ENCODE measurements at regions of chr12 and their contacts with region 1.

Region 1: GRCh38 chr12:6873094-6874014 is at the start of gene SPSB2:
- DNase-seq: peak; percentile 96
- H3K4me3 ChIP-seq: peak within 1 kb of the TSS; percentile 59 to 92 (median 84)
- H3K27ac ChIP-seq: peak within 1 kb of the TSS; percentile 60
- H3K4me1 ChIP-seq: peaks cover 34% of the 10 kb centered on the region
- H3K27me3 ChIP-seq: no peaks in the 10 kb centered on the region
- CTCF ChIP-seq: no peak
- POLR2A ChIP-seq: peak; percentile 91
- total RNA-seq, gene SPSB2: 3.9 and 6.9 TPM in 2 replicates

Region 2: DNA sequence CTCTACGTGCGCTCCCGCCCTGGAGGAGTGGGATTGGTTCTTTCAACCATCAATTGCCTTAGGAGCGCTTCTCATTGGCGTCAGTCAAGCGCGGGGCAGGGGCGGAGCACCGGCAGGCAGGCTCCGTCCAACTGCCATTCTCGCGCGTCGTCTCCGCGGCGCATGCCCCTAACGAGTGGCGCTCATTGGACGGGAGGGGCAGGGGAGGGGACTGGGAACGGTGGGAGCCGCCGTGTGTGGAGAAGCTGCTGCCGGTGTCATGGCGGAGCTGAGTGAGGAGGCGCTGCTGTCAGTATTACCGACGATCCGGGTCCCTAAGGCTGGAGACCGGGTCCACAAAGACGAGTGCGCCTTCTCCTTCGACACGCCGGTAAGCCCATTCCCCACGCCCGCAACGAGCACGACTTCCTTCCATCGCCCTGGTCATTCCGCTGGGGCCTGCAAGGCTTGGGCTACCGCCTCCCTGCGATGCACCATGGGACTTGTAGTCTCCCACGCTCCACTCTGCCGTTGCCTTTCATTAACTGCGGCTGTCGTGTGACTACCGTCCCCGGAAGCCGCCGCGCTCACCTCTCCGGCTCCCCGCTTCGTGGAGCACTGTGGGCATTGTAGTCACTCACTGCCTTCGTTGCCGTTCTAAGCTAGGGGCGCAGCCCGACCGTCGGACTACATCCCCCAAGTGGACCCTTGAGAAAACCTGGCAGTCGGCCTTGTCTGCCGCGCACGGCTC is 21.3 kb before region 1 on chr12 and contains the start of gene USP5:
- CTCF ChIA-PET with region 1: interaction called, 30 read pairs
- POLR2A ChIA-PET with region 1: interaction called, 48 read pairs
- dilution Hi-C with region 1: no loop called
- intact Hi-C with region 1: loop called (anchors 1 kb)
- DNase-seq: peak; percentile 100
- H3K4me3 ChIP-seq: peak within 1 kb of the TSS; percentile 63 to 93 (median 76)
- H3K27ac ChIP-seq: peak within 1 kb of the TSS; percentile 33
- H3K4me1 ChIP-seq: peaks cover 24% of the 10 kb centered on the region
- H3K27me3 ChIP-seq: no peaks in the 10 kb centered on the region
- CTCF ChIP-seq: no peak
- POLR2A ChIP-seq: peak; percentile 54
- total RNA-seq, gene USP5: 126 and 135 TPM in 2 replicates

Region 3: DNA sequence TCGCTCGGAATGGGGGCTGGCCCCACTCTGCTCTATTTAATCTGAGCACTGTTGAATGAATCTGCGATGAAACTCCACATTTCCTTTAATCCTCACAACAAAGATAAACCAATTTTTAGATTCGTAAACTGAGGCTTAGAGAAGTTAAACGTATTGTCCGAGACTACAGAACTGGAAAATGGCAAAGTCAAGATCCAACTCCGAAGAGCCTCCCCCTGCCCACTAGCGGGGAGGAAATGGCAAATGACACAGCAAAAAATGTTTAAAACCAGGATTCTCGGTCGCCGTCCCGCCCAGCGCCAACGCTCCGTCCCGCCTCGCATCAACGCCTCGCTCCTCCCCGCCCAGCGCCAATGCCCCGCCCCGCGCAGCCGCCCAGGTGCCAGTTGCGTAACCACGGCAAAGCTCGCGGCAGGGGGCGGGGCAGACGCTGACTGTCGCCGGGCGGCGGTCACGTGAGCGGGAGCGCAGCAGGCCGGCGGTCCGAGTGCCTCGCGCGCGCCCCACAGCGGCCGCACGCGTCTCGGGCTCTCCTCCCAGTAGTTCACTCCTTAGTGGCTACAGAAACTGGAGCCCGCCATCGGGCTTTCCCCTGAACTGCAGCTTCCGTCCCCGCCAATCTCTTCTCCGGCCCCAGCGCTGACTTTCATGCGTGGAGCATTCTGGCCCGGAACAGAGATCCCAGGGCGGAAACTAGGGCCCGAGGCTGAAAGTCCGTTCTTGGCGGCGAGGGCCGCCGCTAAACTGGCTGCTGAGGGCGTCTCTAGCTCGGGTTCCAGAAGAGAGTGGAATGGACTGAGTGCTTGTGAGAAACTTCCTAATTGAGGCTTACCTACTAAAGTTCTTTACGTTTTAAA is 17.7 kb after region 1 on chr12:
- CTCF ChIA-PET with region 1: interaction called, 74 read pairs
- POLR2A ChIA-PET with region 1: interaction called, 22 read pairs
- dilution Hi-C with region 1: no loop called
- intact Hi-C with region 1: loop called (anchors 1 kb)
- DNase-seq: peak; percentile 98
- H3K4me3 ChIP-seq: peak overlapping the region; percentile 36 to 67 (median 46)
- H3K27ac ChIP-seq: peak overlapping the region; percentile 96
- H3K4me1 ChIP-seq: peaks cover 10% of the 10 kb centered on the region
- H3K27me3 ChIP-seq: no peaks in the 10 kb centered on the region
- CTCF ChIP-seq: peak; percentile 83 to 89
- POLR2A ChIP-seq: peak; percentile 93

Region 4: DNA sequence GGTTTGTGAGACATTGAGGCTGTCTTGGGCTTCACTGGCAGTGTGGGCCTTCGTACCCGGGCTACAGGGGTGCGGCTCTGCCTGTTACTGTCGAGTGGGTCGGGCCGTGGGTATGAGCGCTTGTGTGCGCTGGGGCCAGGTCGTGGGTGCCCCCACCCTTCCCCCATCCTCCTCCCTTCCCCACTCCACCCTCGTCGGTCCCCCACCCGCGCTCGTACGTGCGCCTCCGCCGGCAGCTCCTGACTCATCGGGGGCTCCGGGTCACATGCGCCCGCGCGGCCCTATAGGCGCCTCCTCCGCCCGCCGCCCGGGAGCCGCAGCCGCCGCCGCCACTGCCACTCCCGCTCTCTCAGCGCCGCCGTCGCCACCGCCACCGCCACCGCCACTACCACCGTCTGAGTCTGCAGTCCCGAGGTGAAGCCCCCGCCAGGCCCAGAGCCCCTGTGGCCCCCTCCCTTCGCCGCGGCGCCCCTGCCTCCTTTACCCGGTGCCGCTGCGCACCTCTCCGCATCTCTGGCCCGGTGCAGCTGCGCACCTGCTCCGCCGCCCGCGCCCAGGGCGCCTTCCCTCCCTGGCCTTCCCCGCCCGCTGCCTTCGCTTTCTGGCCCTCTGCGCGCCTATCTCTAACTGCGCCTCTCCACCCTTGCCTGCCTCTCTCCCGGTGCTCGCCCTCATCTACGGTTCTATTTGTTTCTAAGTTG is 41.0 kb after region 1 on chr12 and contains the start of gene ENO2:
- CTCF ChIA-PET with region 1: interaction called, 12 read pairs
- POLR2A ChIA-PET with region 1: no interaction called
- dilution Hi-C with region 1: no loop called
- intact Hi-C with region 1: no loop called
- DNase-seq: peak; percentile 51
- H3K4me3 ChIP-seq: peak within 1 kb of the TSS; percentile 51 to 57 (median 52)
- H3K27ac ChIP-seq: no peak within 1 kb of the TSS
- H3K4me1 ChIP-seq: peaks cover 11% of the 10 kb centered on the region
- H3K27me3 ChIP-seq: no peaks in the 10 kb centered on the region
- CTCF ChIP-seq: no peak
- POLR2A ChIP-seq: no peak
- total RNA-seq, gene ENO2: 13.8 and 18.6 TPM in 2 replicates

Region 5: DNA sequence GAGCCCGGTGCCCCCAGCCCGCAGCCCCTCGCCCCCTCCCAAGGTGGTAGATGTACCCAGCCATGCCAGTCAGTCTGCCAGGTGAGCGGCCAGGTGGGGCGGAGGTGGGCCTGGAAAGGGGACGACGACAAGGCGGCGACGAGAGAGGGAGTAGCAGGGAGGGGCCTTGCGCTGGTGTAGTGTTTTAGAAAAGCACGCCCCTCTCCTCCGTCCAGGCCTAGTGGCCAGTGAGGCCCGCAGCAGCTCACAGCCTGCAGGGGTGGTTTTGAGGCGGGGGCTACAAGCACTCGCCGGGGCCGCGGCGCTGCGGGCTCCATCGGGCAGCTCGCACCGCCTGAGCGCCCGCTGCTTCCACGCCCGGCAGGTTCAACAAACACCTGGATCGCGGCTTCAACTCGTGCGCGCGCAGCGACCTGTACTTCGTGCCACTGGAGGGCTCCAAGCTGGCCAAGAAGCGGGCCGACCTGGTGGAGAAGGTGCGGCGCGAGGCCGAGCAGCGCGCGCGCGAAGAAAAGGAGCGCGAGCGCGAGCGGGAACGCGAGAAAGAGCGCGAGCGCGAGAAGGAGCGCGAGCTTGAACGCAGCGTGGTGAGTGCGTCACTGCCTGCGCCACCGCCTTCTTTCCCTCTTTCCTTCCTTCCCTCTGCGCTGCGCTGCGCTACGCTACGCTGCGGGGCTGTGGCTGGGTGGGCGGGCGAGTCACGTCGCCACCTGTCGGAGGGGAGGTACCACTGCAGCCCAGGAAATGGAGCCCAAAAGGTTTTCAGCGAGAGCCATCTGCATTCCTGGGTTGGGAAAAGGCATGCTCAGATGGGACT is 64.3 kb after region 1 on chr12:
- CTCF ChIA-PET with region 1: interaction called, 27 read pairs
- POLR2A ChIA-PET with region 1: interaction called, 3 read pairs
- dilution Hi-C with region 1: no loop called
- intact Hi-C with region 1: loop called (anchors 1 kb)
- DNase-seq: peak; percentile 96
- H3K4me3 ChIP-seq: peak overlapping the region in 2 of 3 experiments; percentile 15 to 51
- H3K27ac ChIP-seq: peak overlapping the region; percentile 41
- H3K4me1 ChIP-seq: peaks cover 22% of the 10 kb centered on the region
- H3K27me3 ChIP-seq: no peaks in the 10 kb centered on the region
- CTCF ChIP-seq: peak; percentile 90 to 98
- POLR2A ChIP-seq: peak; percentile 94

Region 6: DNA sequence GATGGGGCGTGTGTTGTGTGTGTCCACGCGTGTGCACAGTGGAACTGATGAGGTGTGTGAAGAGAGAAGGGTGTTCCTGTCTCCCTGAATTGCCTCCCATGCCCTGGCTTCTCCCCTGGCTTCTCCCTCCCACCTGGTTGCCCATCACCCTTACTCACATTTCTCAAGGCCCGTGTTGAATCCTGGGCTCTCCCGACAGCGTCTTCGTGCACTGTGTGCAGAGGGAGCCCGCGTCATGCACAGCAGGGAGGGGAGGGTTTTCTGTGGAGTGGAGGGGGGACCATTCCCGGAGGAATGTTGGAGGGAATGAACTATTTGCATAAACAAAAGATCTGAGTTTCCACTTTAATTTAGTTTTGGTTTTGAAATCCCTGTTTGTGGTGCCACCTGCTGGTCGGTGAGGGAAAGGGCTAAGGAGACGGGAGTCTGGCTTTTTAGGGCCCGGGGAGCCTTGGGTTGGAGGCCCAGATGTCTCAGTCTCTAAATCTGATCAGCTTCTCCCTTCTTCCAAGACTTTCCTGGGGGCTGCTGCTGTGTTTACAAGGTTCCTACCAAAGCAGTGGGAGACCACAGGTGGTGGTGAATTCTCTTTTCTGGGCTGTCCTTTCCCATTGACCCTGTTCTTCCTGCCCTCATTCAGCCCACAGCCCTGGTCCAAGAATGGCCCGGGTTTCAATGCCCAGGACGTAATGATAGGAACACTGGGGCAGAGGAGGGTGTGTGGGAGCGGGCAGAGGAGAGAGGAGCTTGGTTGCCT is 219.1 kb after region 1 on chr12 and contains the start of gene C1R:
- CTCF ChIA-PET with region 1: interaction called, 3 read pairs
- POLR2A ChIA-PET with region 1: no interaction called
- dilution Hi-C with region 1: no loop called
- intact Hi-C with region 1: loop called (anchors 5 kb)
- DNase-seq: peak; percentile 67
- H3K4me3 ChIP-seq: peak within 1 kb of the TSS; percentile 51 to 70 (median 64)
- H3K27ac ChIP-seq: no peak within 1 kb of the TSS
- H3K4me1 ChIP-seq: peaks cover 6% of the 10 kb centered on the region
- H3K27me3 ChIP-seq: peaks cover 0 to 16% of the 10 kb centered on the region in 2 experiments
- CTCF ChIP-seq: peak; percentile 85
- POLR2A ChIP-seq: no peak
- total RNA-seq, gene C1R: 3.1 and 3.6 TPM in 2 replicates